ENCODE measurements at regions of chr18 and their contacts with region 1.

Region 1: GRCh38 chr18:25136416-25137196 is 215.4 kb downstream of the ZNF521 start:
- DNase-seq: no peak

Region 2: GRCh38 chr18:25075783-25076182 is 60.8 kb before region 1 on chr18:
- intact Hi-C with region 1: loop called in 1 of 2 experiments (anchors 2 kb)
- DNase-seq: no peak

Region 3: GRCh38 chr18:27081701-27082100 is 1945.1 kb after region 1 on chr18:
- intact Hi-C with region 1: no loop called
- DNase-seq: no peak